ENCODE measurements at regions of chr17 and their contacts with region 1.

Region 1: GRCh38 chr17:79087428-79088143 is 13.0 kb downstream of the ENGASE start:
- DNase-seq: peak; percentile 89
- ATAC-seq: peak; percentile 85
- H3K4me3 Mint-ChIP-seq: no peak overlapping the region
- H3K27ac Mint-ChIP-seq: no peak overlapping the region
- H3K4me1 Mint-ChIP-seq: no peaks in the 10 kb centered on the region
- H3K27me3 Mint-ChIP-seq: no peaks in the 10 kb centered on the region
- CTCF ChIP-seq: peak; percentile 95

Region 2: DNA sequence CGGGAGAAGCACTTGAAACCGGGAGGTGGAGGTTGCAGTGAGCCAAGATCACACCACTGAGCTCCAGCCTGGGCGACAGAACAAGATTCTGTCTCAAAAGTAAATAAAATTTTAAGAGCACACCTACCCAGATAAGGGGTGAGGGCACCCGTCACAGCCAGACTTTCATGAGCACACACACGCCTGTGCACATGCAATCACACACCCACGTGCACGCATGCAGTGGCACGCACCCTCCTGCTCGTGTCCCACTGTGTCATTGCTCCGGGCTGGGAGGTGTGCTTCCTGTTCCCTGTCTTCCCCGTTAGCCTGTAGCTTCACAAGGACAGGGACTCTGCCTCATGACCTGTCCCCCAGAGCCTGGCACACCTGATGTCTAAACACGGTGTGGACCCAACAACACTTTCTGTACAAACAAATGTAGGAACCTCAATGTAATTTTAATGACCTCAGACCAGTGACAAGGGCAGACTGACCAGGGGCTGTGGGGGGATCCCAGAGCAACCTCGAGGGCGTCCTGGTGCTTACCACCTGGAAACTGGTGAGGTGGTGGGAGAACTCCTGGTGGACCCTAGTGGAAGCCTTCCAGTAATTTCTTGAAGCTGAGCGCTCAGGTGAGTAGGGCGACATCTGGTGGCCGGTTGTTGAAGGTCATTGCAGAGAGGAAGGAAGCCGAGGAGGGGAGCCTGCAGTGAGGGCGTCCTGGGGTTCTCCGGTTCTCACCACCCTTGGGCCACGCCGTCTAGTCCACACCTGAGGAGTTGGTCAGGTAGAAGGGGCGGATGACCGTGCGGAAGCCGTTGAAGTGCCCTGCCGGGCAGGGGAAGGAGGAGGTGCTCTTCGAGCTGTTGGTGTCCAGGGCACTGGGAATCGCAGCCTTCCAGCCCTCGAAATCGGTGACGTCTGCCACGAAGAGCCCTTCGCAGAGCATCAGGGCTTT is 116.5 kb before region 1 on chr17:
- CTCF ChIA-PET with region 1: no interaction called
- POLR2A ChIA-PET with region 1: no interaction called
- DNase-seq: peak; percentile 87
- ATAC-seq: peak; percentile 48
- H3K4me3 Mint-ChIP-seq: no peak overlapping the region
- H3K27ac Mint-ChIP-seq: peak overlapping the region; percentile 75
- H3K4me1 Mint-ChIP-seq: peaks cover 24% of the 10 kb centered on the region
- H3K27me3 Mint-ChIP-seq: no peaks in the 10 kb centered on the region; the same call in 1 of the 2 replicates
- CTCF ChIP-seq: peak; percentile 75

Region 3: GRCh38 chr17:79019632-79020584 is 67.7 kb before region 1 on chr17:
- CTCF ChIA-PET with region 1: no interaction called
- POLR2A ChIA-PET with region 1: no interaction called
- DNase-seq: no peak
- ATAC-seq: no peak
- H3K4me3 Mint-ChIP-seq: no peak overlapping the region
- H3K27ac Mint-ChIP-seq: no peak overlapping the region
- H3K4me1 Mint-ChIP-seq: peaks cover 13% of the 10 kb centered on the region
- H3K27me3 Mint-ChIP-seq: peaks cover 70% of the 10 kb centered on the region
- CTCF ChIP-seq: peak; percentile 35

Region 4: DNA sequence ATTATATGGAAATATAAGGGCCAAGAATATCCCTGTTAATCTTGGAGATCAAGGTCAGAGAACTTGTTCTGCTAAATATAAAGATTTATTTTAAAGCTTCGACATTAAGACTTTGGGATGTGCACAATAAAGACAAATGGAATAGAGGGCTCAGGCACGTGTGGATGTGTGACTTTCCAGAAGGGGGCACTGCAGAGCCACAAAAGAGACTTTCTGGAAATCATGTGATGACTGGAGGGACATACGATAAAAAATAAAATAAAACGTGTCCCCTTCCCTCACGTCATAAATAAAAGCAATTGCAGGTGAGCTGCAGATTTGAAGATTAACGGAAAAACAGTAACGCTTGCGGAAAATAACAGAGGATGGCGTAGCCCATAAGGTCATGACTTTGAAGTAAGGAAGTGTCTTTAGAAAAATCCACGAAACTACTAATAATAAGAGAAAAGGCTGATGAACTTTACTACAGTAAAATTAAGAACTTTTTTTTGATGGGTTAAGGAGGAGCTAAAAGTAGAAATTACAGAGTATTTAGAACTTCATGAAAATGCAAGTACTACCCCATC is 22.4 kb before region 1 on chr17:
- CTCF ChIA-PET with region 1: interaction called, 13 read pairs
- POLR2A ChIA-PET with region 1: no interaction called
- DNase-seq: peak; percentile 70
- ATAC-seq: no peak
- H3K4me3 Mint-ChIP-seq: no peak overlapping the region
- H3K27ac Mint-ChIP-seq: no peak overlapping the region
- H3K4me1 Mint-ChIP-seq: no peaks in the 10 kb centered on the region
- H3K27me3 Mint-ChIP-seq: no peaks in the 10 kb centered on the region; the same call in none of the 2 replicates
- CTCF ChIP-seq: peak; percentile 63

Region 5: DNA sequence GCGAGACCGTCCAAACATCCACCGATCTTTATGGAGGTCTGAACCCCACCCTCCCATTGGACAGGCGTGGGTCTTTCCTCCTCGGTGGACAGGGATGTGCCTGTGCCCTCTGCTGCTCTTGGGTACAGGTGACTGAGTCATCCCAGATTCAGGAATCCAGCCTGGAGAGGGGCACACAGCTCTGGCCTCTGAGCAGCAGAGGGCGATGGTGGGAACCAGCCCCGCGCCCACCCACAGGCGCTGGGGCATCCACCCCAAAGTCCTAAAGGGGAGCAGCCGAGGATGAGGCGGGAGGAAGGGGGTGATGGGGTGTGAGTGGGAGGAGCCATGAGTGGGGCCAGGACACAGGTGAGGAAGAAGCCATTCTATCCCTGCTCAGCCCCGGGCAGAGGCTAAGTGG is 22.0 kb after region 1 on chr17:
- CTCF ChIA-PET with region 1: interaction called, 25 read pairs
- POLR2A ChIA-PET with region 1: no interaction called
- DNase-seq: peak; percentile 60
- ATAC-seq: peak; percentile 78
- H3K4me3 Mint-ChIP-seq: no peak overlapping the region
- H3K27ac Mint-ChIP-seq: no peak overlapping the region
- H3K4me1 Mint-ChIP-seq: no peaks in the 10 kb centered on the region
- H3K27me3 Mint-ChIP-seq: no peaks in the 10 kb centered on the region
- CTCF ChIP-seq: 0 out of 2 replicates have a peak, but pooled peaks have one; percentile 23

Region 6: GRCh38 chr17:79126139-79126538 is 38.6 kb after region 1 on chr17:
- CTCF ChIA-PET with region 1: interaction called, 10 read pairs
- POLR2A ChIA-PET with region 1: no interaction called
- DNase-seq: peak; percentile 54
- ATAC-seq: peak; percentile 75
- H3K4me3 Mint-ChIP-seq: no peak overlapping the region
- H3K27ac Mint-ChIP-seq: peak overlapping the region; percentile 54; the same call in 1 of the 2 replicates
- H3K4me1 Mint-ChIP-seq: no peaks in the 10 kb centered on the region
- H3K27me3 Mint-ChIP-seq: no peaks in the 10 kb centered on the region
- CTCF ChIP-seq: no peak

Region 7: DNA sequence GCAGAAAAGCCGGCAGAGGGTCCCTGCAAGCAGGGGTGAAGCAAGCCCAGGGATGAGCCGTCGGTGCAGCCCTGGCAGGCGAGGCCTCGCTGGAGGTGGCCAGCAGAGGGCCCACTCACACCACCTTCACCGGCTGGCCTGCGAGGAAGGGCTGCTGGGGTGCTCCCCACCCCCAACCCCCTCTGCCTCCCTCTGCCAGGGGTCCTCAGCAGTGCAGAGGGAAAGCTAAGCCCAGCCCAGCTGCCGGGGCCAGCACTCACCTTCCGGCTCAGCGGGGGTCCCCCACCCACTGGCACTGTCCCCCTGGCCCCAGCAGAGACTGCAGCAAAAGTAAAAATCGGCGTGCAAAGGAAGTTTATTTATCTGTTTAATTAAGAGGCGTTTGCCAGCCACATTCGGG is 100.5 kb after region 1 on chr17:
- CTCF ChIA-PET with region 1: interaction called, 16 read pairs
- POLR2A ChIA-PET with region 1: no interaction called
- DNase-seq: peak; percentile 85
- ATAC-seq: peak; percentile 42
- H3K4me3 Mint-ChIP-seq: peak overlapping the region; percentile 12; the same call in 1 of the 2 replicates
- H3K27ac Mint-ChIP-seq: no peak overlapping the region
- H3K4me1 Mint-ChIP-seq: peaks cover 53% of the 10 kb centered on the region
- H3K27me3 Mint-ChIP-seq: peaks cover 16% of the 10 kb centered on the region
- CTCF ChIP-seq: peak; percentile 65